ENCODE measurements at regions of chr4 and their contacts with region 1.

Region 1: GRCh38 chr4:99949034-99949998 is 759 bp downstream of the H2AZ1 start:
- DNase-seq: peak; percentile 87 to 94 (median 88)
- H3K4me3 ChIP-seq: peak overlapping the region; percentile 90 to 98
- H3K4me3 Mint-ChIP-seq: no peak overlapping the region
- H3K27ac ChIP-seq: peak overlapping the region; percentile 86
- H3K27ac Mint-ChIP-seq: no peak overlapping the region
- H3K4me1 ChIP-seq: peaks cover 53% of the 10 kb centered on the region
- H3K4me1 Mint-ChIP-seq: peaks cover 24 to 33% (median 32%) of the 10 kb centered on the region in 4 donors
- H3K27me3 ChIP-seq: no peaks in the 10 kb centered on the region
- H3K27me3 Mint-ChIP-seq: no peaks in the 10 kb centered on the region

Region 2: GRCh38 chr4:98260579-98261290 is 1688.6 kb before region 1 on chr4:
- CTCF ChIA-PET with region 1: no interaction called
- POLR2A ChIA-PET with region 1: interaction called, 7 read pairs
- intact Hi-C with region 1: loop called (anchors 2 kb)
- DNase-seq: peak in 4 of 5 donors; percentile 83 to 90 (median 84)
- H3K4me3 ChIP-seq: peak overlapping the region; percentile 70 to 82
- H3K4me3 Mint-ChIP-seq: peak overlapping the region; percentile 93 to 95 (median 94)
- H3K27ac ChIP-seq: peak overlapping the region; percentile 86
- H3K27ac Mint-ChIP-seq: peak overlapping the region; percentile 90 to 94 (median 93)
- H3K4me1 ChIP-seq: peaks cover 32% of the 10 kb centered on the region
- H3K4me1 Mint-ChIP-seq: peaks cover 37 to 60% (median 47%) of the 10 kb centered on the region in 4 donors
- H3K27me3 ChIP-seq: no peaks in the 10 kb centered on the region
- H3K27me3 Mint-ChIP-seq: no peaks in the 10 kb centered on the region

Region 3: DNA sequence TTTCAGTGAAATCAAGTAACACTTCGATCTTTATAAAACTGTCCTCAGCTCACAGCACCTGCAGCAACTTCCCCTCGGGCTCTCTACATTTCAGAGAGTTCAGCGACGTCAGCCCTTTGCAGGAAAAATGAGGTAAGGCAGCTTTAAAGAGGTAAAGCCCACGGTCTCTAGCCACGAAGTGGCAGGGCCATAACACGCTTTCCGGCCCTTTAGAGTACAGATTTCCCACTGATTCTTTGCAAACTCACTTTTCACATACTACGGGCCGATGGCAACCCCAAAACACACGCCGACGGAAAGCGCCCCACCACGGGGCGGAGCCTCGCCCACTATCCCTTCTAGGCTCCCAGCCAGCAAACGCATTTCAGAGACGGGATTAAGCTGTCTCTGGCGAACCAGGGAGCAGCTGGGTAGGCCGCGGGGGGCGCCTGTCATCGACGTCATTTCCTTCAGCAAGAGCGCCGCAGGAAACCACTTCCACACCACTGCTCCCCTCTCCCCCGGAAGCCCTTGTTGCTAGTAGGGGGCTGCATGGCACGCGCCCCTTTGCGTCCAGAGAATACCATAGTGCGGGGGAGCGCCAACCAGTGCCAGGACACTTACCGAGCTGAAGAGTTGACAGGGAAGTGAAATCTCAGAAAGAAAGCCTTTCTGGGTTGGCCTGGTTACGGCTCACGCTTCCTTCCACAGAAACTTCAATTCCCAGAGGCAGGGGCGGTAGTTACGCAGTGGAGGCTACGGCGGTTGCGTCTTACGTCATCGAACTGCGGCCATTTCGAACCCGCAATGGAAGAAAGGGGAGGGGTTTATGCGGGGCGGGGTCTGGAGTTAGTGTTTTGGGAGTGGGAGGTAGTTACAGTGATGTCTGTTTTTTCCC is 385.8 kb before region 1 on chr4 and contains the start of gene TRMT10A:
- CTCF ChIA-PET with region 1: interaction called, 19 read pairs
- POLR2A ChIA-PET with region 1: interaction called, 33 read pairs
- intact Hi-C with region 1: loop called (anchors 1 kb)
- DNase-seq: peak; percentile 97 to 98 (median 98)
- H3K4me3 ChIP-seq: peak within 1 kb of the TSS; percentile 74 to 95
- H3K4me3 Mint-ChIP-seq: peak within 1 kb of the TSS; percentile 95 to 99 (median 98)
- H3K27ac ChIP-seq: peak within 1 kb of the TSS; percentile 93
- H3K27ac Mint-ChIP-seq: peak within 1 kb of the TSS; percentile 99 to 100 (median 100)
- H3K4me1 ChIP-seq: peaks cover 10% of the 10 kb centered on the region
- H3K4me1 Mint-ChIP-seq: peaks cover 13 to 24% (median 19%) of the 10 kb centered on the region in 4 donors
- H3K27me3 ChIP-seq: no peaks in the 10 kb centered on the region
- H3K27me3 Mint-ChIP-seq: peaks cover 7 to 14% of the 10 kb centered on the region in 2 donors
- total RNA-seq, gene TRMT10A: 5.4 to 5.7 TPM

Region 4: GRCh38 chr4:99847362-99847976 is 101.8 kb before region 1 on chr4:
- CTCF ChIA-PET with region 1: interaction called, 4 read pairs
- POLR2A ChIA-PET with region 1: interaction called, 12 read pairs
- intact Hi-C with region 1: no loop called
- DNase-seq: peak; percentile 29 to 44 (median 33)
- H3K4me3 ChIP-seq: peak overlapping the region in 1 of 2 donors; percentile 38
- H3K4me3 Mint-ChIP-seq: peak overlapping the region; percentile 63 to 86 (median 76)
- H3K27ac ChIP-seq: peak overlapping the region; percentile 37
- H3K27ac Mint-ChIP-seq: peak overlapping the region; percentile 77 to 98 (median 94)
- H3K4me1 ChIP-seq: peaks cover 68% of the 10 kb centered on the region
- H3K4me1 Mint-ChIP-seq: peaks cover 39 to 70% (median 55%) of the 10 kb centered on the region in 4 donors
- H3K27me3 ChIP-seq: no peaks in the 10 kb centered on the region
- H3K27me3 Mint-ChIP-seq: no peaks in the 10 kb centered on the region

Region 5: DNA sequence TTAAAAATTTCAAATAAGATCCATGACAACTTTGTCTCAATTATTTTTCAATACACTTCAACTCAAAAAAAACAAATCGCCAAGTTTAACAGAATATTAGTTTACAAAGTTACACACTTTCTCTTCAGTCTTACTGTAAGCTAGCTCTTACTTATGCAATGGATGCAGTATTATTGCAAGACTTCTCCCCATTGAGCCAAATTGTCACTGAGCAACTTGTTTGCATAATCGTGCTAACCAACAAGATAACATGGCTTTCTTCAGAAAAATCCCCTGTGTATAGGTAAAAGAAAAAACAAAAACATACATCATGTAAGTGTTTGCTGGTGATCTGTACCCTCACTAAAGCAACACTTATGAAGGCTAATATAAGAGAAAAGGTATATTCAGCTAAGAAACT is 21.8 kb before region 1 on chr4:
- CTCF ChIA-PET with region 1: interaction called, 7 read pairs
- POLR2A ChIA-PET with region 1: interaction called, 25 read pairs
- intact Hi-C with region 1: loop called (anchors 2 kb)
- DNase-seq: no peak
- H3K4me3 ChIP-seq: no peak overlapping the region
- H3K4me3 Mint-ChIP-seq: no peak overlapping the region
- H3K27ac ChIP-seq: no peak overlapping the region
- H3K27ac Mint-ChIP-seq: peak overlapping the region in 2 of 7 donors; percentile 13 to 18
- H3K4me1 ChIP-seq: peaks cover 31% of the 10 kb centered on the region
- H3K4me1 Mint-ChIP-seq: peaks cover 24 to 48% (median 35%) of the 10 kb centered on the region in 4 donors
- H3K27me3 ChIP-seq: no peaks in the 10 kb centered on the region
- H3K27me3 Mint-ChIP-seq: no peaks in the 10 kb centered on the region

Region 6: DNA sequence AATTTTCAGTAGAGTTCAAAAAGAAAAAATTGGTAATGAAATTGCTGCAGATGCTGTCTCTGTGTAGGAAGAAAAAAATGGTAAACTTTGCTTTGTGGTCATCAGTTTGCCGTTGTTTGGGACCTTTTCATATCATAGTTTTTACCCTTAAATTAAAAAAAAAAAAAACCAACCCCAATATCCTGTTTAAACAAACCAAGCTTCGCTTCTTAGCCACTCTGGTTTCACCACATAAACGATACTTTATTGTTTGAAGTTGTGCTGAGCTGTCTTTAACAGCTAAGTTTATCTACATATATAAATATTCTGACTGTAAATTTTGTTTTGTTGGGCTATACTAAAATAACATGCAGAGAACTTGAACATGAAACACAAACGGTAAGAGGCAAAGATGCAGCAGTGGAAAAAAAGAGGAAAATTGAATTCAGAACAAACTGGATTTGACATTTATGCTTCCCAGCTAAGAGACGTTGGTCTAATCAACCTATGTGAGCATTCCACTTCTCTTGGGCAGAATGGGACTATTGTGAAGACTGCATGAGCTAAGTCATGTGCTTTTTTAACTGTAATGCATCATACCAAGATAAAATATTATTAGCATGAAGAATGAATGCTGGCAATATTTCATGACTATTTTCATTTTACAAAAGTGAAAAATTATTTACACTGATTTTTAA is 16.5 kb after region 1 on chr4:
- CTCF ChIA-PET with region 1: interaction called, 10 read pairs
- POLR2A ChIA-PET with region 1: interaction called, 21 read pairs
- intact Hi-C with region 1: no loop called
- DNase-seq: peak in 4 of 5 donors; percentile 45 to 57 (median 48)
- H3K4me3 ChIP-seq: peak overlapping the region in 1 of 2 donors; percentile 14
- H3K4me3 Mint-ChIP-seq: peak overlapping the region; percentile 3 to 64 (median 22)
- H3K27ac ChIP-seq: no peak overlapping the region
- H3K27ac Mint-ChIP-seq: peak overlapping the region in 6 of 7 donors; percentile 19 to 70 (median 33)
- H3K4me1 ChIP-seq: peaks cover 19% of the 10 kb centered on the region
- H3K4me1 Mint-ChIP-seq: peaks cover 10 to 23% (median 16%) of the 10 kb centered on the region in 4 donors
- H3K27me3 ChIP-seq: no peaks in the 10 kb centered on the region
- H3K27me3 Mint-ChIP-seq: peaks cover 3 to 4% of the 10 kb centered on the region in 2 donors

Region 7: GRCh38 chr4:100391863-100392262 is 442.5 kb after region 1 on chr4:
- CTCF ChIA-PET with region 1: no interaction called
- POLR2A ChIA-PET with region 1: no interaction called
- intact Hi-C with region 1: no loop called
- DNase-seq: no peak
- H3K4me3 ChIP-seq: no peak overlapping the region
- H3K4me3 Mint-ChIP-seq: no peak overlapping the region
- H3K27ac ChIP-seq: no peak overlapping the region
- H3K27ac Mint-ChIP-seq: no peak overlapping the region
- H3K4me1 ChIP-seq: no peaks in the 10 kb centered on the region
- H3K4me1 Mint-ChIP-seq: no peaks in the 10 kb centered on the region
- H3K27me3 ChIP-seq: no peaks in the 10 kb centered on the region
- H3K27me3 Mint-ChIP-seq: no peaks in the 10 kb centered on the region

Measured in CD4-positive, alpha-beta memory T cell (primary cell).